ENCODE measurements at regions of chr2 and their contacts with region 1.

Region 1: GRCh38 chr2:112121682-112122254 is 16.4 kb upstream of the FBLN7 start:
- DNase-seq: peak in 1 of 4 experiments; percentile 55
- ATAC-seq: no peak; the same call in 2 of the 3 replicates
- H3K4me3 ChIP-seq: no peak overlapping the region
- H3K27ac ChIP-seq: no peak overlapping the region
- H3K4me1 ChIP-seq: no peaks in the 10 kb centered on the region
- H3K27me3 ChIP-seq: no peaks in the 10 kb centered on the region
- CTCF ChIP-seq: peak; percentile 43 to 78 (median 44); a peak in 4 of 6 replicates
- EP300 ChIP-seq: no peak
- POLR2A ChIP-seq: no peak
- RAD21 ChIP-seq: peak; percentile 73 to 80

Region 2: GRCh38 chr2:112087346-112088020 is 34.3 kb before region 1 on chr2:
- CTCF ChIA-PET with region 1: no interaction called
- POLR2A ChIA-PET with region 1: no interaction called
- in situ Hi-C with region 1: no loop called
- intact Hi-C with region 1: no loop called
- DNase-seq: no peak
- ATAC-seq: no peak
- H3K4me3 ChIP-seq: no peak overlapping the region
- H3K27ac ChIP-seq: no peak overlapping the region
- H3K4me1 ChIP-seq: no peaks in the 10 kb centered on the region
- H3K27me3 ChIP-seq: no peaks in the 10 kb centered on the region
- CTCF ChIP-seq: no peak
- EP300 ChIP-seq: no peak
- POLR2A ChIP-seq: no peak
- RAD21 ChIP-seq: no peak

Region 3: DNA sequence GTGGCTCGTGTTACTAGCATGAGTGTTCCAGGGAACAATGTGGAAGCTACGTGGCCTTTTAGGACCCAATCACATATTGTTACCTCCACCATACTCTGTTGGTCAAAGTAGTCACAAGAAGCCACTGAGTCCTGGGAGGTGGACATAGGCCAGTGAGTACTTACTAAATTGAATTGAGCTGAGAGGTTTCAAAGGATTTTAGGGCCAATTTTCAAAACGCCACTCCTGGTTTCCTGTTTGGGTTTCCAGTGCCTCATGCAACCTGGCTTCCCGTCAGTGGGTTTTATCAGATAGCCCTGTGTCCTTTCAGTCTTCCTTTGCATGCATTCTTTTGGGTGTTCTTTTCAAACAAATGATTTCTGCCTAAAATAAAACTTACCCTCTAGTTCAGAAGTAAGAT is 72.7 kb after region 1 on chr2:
- CTCF ChIA-PET with region 1: no interaction called
- POLR2A ChIA-PET with region 1: no interaction called
- in situ Hi-C with region 1: no loop called
- intact Hi-C with region 1: loop called (anchors 5 kb)
- DNase-seq: no peak
- ATAC-seq: no peak
- H3K4me3 ChIP-seq: no peak overlapping the region
- H3K27ac ChIP-seq: no peak overlapping the region
- H3K4me1 ChIP-seq: peaks cover 0 to 7% of the 10 kb centered on the region in 2 experiments; a peak in 1 of 5 replicates
- H3K27me3 ChIP-seq: peaks cover 0 to 5% of the 10 kb centered on the region in 2 experiments; a peak in 1 of 5 replicates
- CTCF ChIP-seq: no peak
- EP300 ChIP-seq: no peak
- POLR2A ChIP-seq: no peak
- RAD21 ChIP-seq: no peak

Measured in K562 (cell line).